CD4-positive, alpha-beta memory T cell (primary cell): ENCODE measurements at regions of chr3 and their contacts with region 1.

Region 1: GRCh38 chr3:51498876-51499738 is 708 bp downstream of the DCAF1 start:
- DNase-seq: peak; percentile 77 to 86 (median 79)
- H3K4me3 ChIP-seq: peak overlapping the region; percentile 54 to 81
- H3K4me3 Mint-ChIP-seq: peak overlapping the region; percentile 91 to 100 (median 95)
- H3K27ac ChIP-seq: peak overlapping the region; percentile 88
- H3K27ac Mint-ChIP-seq: peak overlapping the region; percentile 93 to 99 (median 98)
- H3K4me1 ChIP-seq: peaks cover 25% of the 10 kb centered on the region
- H3K4me1 Mint-ChIP-seq: peaks cover 12 to 27% (median 14%) of the 10 kb centered on the region in 4 donors
- H3K27me3 ChIP-seq: no peaks in the 10 kb centered on the region
- H3K27me3 Mint-ChIP-seq: peaks cover 0 to 2% of the 10 kb centered on the region in 2 donors

Region 2: GRCh38 chr3:50568947-50569749 is 930.0 kb before region 1 on chr3 and contains the start of gene HEMK1:
- CTCF ChIA-PET with region 1: no interaction called
- POLR2A ChIA-PET with region 1: interaction called, 11 read pairs
- intact Hi-C with region 1: loop called (anchors 2 kb)
- DNase-seq: peak; percentile 90 to 92 (median 91)
- H3K4me3 ChIP-seq: peak within 1 kb of the TSS; percentile 88 to 93
- H3K4me3 Mint-ChIP-seq: peak within 1 kb of the TSS; percentile 93 to 98 (median 96)
- H3K27ac ChIP-seq: peak within 1 kb of the TSS; percentile 83
- H3K27ac Mint-ChIP-seq: peak within 1 kb of the TSS; percentile 92 to 100 (median 98)
- H3K4me1 ChIP-seq: peaks cover 71% of the 10 kb centered on the region
- H3K4me1 Mint-ChIP-seq: peaks cover 45 to 83% (median 57%) of the 10 kb centered on the region in 4 donors
- H3K27me3 ChIP-seq: no peaks in the 10 kb centered on the region
- H3K27me3 Mint-ChIP-seq: no peaks in the 10 kb centered on the region
- total RNA-seq, gene HEMK1: 55.3 to 56.7 TPM

Region 3: GRCh38 chr3:51391075-51391567 is 108.0 kb before region 1 on chr3 and contains the start of gene RBM15B:
- CTCF ChIA-PET with region 1: interaction called, 52 read pairs
- POLR2A ChIA-PET with region 1: interaction called, 34 read pairs
- intact Hi-C with region 1: loop called (anchors 1 kb)
- DNase-seq: peak; percentile 96 to 98 (median 97)
- H3K4me3 ChIP-seq: peak within 1 kb of the TSS; percentile 57
- H3K4me3 Mint-ChIP-seq: peak within 1 kb of the TSS; percentile 76 to 91 (median 83)
- H3K27ac ChIP-seq: peak within 1 kb of the TSS; percentile 79
- H3K27ac Mint-ChIP-seq: peak within 1 kb of the TSS; percentile 89 to 97 (median 95)
- H3K4me1 ChIP-seq: peaks cover 69% of the 10 kb centered on the region
- H3K4me1 Mint-ChIP-seq: peaks cover 33 to 81% (median 61%) of the 10 kb centered on the region in 4 donors
- H3K27me3 ChIP-seq: no peaks in the 10 kb centered on the region
- H3K27me3 Mint-ChIP-seq: no peaks in the 10 kb centered on the region
- total RNA-seq, gene RBM15B: 38.3 to 39.9 TPM

Region 4: GRCh38 chr3:51670823-51671733 is 172.0 kb after region 1 on chr3 and contains the start of gene TEX264:
- CTCF ChIA-PET with region 1: interaction called, 156 read pairs
- POLR2A ChIA-PET with region 1: interaction called, 114 read pairs
- intact Hi-C with region 1: loop called (anchors 1 kb)
- DNase-seq: peak; percentile 95 to 97 (median 96)
- H3K4me3 ChIP-seq: peak within 1 kb of the TSS; percentile 88 to 89
- H3K4me3 Mint-ChIP-seq: peak within 1 kb of the TSS; percentile 88 to 95 (median 92)
- H3K27ac ChIP-seq: peak within 1 kb of the TSS; percentile 83
- H3K27ac Mint-ChIP-seq: peak within 1 kb of the TSS; percentile 95 to 97 (median 97)
- H3K4me1 ChIP-seq: peaks cover 66% of the 10 kb centered on the region
- H3K4me1 Mint-ChIP-seq: peaks cover 54 to 74% (median 63%) of the 10 kb centered on the region in 4 donors
- H3K27me3 ChIP-seq: no peaks in the 10 kb centered on the region
- H3K27me3 Mint-ChIP-seq: no peaks in the 10 kb centered on the region
- total RNA-seq, gene TEX264: 40.0 to 40.9 TPM

Region 5: DNA sequence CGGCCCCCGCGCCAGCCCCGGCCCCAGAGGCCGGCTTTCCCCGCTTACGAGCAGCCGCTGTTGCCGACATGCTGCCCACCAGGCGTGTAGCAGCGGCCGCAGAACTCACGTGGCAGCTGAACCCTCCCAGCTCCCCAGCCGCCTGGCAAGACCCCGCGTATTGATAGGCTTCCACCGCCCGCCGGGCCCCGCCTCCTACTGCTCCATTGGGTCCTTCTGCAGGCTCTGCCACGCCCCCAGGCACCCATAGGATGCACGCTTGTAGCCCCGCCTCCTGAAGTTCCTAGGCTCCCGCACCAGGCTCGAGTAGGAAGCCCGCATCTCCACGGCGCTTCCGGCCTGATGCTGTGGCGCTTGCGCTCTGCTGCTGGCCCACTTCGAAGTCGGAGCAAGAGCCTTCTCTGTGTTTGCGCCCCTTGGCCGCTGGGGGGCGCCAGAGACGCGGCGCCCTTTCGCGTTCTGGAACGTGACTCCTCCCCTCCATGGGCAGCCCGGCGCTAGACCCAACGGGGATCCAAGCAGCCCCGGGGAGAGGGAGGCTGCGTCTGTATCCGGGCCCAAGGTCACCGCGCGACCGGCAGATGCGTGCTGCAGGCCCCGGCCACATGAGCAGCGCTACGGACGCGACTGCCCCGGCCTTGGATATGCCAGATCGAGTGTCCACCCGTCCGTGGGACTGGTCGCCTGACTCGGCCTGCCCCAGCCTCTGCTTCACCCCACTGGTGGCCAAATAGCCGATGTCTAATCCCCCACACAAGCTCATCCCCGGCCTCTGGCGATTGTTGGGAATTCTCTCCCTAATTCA is 442.9 kb after region 1 on chr3 and contains the starts of genes PARP3 and RRP9:
- CTCF ChIA-PET with region 1: interaction called, 12 read pairs
- POLR2A ChIA-PET with region 1: interaction called, 5 read pairs
- intact Hi-C with region 1: no loop called
- DNase-seq: peak; percentile 98 to 100 (median 100)
- H3K4me3 ChIP-seq: peak within 1 kb of the TSS; percentile 72 to 73
- H3K4me3 Mint-ChIP-seq: peak within 1 kb of the TSS; percentile 88 to 96 (median 92)
- H3K27ac ChIP-seq: peak within 1 kb of the TSS; percentile 66
- H3K27ac Mint-ChIP-seq: peak within 1 kb of the TSS; percentile 73 to 94 (median 91)
- H3K4me1 ChIP-seq: peaks cover 37% of the 10 kb centered on the region
- H3K4me1 Mint-ChIP-seq: peaks cover 18 to 48% (median 28%) of the 10 kb centered on the region in 4 donors
- H3K27me3 ChIP-seq: no peaks in the 10 kb centered on the region
- H3K27me3 Mint-ChIP-seq: no peaks in the 10 kb centered on the region
- total RNA-seq, gene PARP3: 8.1 to 10.5 TPM
- total RNA-seq, gene RRP9: 15.2 to 17.3 TPM

Region 6: DNA sequence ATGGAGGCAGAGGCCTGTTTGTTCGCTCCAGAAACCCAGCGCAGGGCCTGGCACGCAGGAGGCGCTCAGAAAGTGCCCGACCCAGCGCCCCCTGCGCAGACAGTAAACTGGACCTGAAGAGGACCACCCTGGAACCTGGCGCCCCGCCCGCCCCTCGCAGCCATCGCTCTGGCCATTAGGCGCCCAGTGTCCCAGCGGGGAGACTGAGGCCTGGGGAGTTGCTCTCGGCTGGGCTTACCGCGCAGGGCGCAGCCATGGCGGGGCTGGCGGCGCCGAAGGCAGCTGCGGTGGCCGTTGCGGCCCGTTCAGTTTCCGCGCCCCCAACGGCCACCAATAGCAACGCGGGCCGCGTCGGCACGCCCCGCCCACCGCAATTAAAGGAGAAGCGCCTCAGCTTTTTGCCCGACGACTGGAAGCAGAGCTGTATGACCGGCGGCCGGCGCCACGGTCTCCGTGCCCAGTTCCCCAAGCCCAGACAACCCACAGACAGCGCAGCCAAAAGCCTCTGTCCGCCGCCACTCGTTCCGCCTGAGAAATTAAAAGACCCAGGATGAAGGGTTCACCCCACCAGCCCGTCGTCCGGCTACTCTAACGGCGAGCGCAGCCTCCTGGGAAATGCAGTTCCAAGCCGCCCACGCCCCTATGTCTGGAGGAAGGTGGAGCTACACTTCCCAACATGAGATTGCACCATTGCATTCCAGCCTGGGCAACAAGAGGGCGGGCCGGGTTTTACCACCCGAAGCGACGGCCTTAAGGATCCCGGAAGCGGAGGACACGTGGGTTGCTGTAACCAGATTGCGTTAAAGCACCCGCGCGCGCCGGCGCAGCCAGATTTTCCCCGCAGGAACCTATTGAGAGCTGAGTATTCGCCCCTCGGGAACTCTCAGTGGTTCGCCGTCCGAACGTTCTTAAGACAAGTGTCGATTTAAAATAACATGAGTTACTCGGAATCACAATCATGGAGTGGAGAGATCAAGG is 655.3 kb after region 1 on chr3 and contains the start of gene POC1A:
- CTCF ChIA-PET with region 1: no interaction called
- POLR2A ChIA-PET with region 1: interaction called, 4 read pairs
- intact Hi-C with region 1: loop called (anchors 10 kb)
- DNase-seq: peak; percentile 83 to 90 (median 85)
- H3K4me3 ChIP-seq: peak within 1 kb of the TSS; percentile 93 to 95
- H3K4me3 Mint-ChIP-seq: peak within 1 kb of the TSS; percentile 93 to 98 (median 97)
- H3K27ac ChIP-seq: peak within 1 kb of the TSS; percentile 74
- H3K27ac Mint-ChIP-seq: peak within 1 kb of the TSS; percentile 95 to 98 (median 98)
- H3K4me1 ChIP-seq: peaks cover 13% of the 10 kb centered on the region
- H3K4me1 Mint-ChIP-seq: peaks cover 3 to 15% (median 8%) of the 10 kb centered on the region in 4 donors
- H3K27me3 ChIP-seq: no peaks in the 10 kb centered on the region
- H3K27me3 Mint-ChIP-seq: no peaks in the 10 kb centered on the region
- total RNA-seq, gene POC1A: 0.99 to 1.1 TPM